ENCODE measurements at regions of chr6 and their contacts with region 1.

Region 1: DNA sequence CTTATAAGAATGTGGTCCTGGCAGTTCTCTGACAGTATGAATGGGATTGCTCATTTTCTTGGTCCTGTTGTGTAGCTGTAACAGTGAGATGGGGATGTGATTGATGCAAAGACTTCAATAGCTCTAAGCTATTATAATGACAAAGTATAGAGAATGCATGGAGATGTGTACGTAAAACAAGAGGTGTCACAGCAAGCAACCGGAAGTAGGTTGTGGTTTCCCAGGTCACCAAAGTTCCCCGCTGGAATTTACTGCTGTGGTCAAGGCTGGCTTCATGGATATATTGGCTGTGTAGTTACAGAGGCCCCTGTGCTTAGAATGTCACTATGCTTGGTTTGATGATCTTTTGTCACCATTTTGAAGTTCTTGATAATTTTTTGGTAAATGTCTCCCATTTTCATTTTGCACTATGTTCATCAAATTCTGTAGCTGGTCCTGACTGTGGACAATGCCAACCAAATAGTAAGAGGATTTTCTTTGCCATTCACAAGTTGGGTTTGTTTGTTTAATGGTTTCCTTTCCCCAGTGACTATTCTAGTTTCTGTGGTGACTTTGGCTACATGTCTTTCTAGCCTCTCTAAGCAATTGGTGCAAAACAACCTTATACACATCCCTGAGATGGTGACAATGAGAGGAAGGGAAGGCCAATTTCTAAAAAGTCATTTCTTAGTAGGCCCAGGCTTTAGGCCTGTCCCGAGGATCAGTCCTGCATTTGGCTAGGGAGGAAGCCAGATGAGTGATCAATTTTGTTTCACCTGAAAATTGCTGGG is 10.5 kb downstream of the DNAH8 start:
- DNase-seq: no peak
- H3K4me3 ChIP-seq: no peak overlapping the region
- H3K27ac ChIP-seq: no peak overlapping the region
- H3K4me1 ChIP-seq: no peaks in the 10 kb centered on the region
- H3K27me3 ChIP-seq: no peaks in the 10 kb centered on the region
- CTCF ChIP-seq: no peak

Region 2: GRCh38 chr6:38378801-38379200 is 346.8 kb before region 1 on chr6:
- CTCF ChIA-PET with region 1: no interaction called
- POLR2A ChIA-PET with region 1: interaction called, 30 read pairs
- intact Hi-C with region 1: no loop called
- DNase-seq: no peak
- H3K4me3 ChIP-seq: no peak overlapping the region
- H3K27ac ChIP-seq: no peak overlapping the region
- H3K4me1 ChIP-seq: no peaks in the 10 kb centered on the region
- H3K27me3 ChIP-seq: no peaks in the 10 kb centered on the region
- CTCF ChIP-seq: no peak

Region 3: DNA sequence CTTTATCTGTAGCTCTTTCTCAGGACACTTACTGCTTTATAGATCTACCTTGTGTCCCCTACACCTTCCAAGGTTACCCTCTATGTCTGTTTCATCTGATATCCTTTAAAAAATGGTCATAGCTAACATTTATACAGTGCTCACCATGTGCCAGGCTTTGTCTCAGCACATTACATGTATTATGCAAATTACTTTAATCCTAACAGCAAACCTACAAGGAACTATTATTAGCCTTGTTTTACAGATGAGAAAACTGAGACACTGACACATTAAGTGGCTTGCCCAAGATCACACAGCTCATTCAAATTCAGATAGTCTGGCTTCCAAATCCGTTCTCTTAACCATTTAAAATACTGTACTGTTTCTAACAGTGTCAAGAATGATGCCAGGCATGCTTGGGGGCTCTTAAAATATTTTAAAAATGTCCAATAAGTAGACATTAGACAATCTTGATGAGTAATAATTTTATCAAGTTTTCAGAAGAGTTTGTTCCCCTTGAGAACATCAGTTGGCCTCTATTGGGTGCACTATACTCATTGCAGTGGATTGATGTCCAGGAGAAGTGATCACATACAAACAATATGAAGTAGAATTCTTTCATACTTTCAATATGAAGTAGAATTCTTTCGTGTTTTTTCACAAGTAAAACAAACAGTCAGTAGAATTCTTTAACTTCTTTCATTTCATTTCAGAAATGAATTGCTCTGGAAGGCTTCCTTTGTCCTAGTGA is 59.1 kb after region 1 on chr6:
- CTCF ChIA-PET with region 1: no interaction called
- POLR2A ChIA-PET with region 1: no interaction called
- intact Hi-C with region 1: no loop called
- DNase-seq: no peak
- H3K4me3 ChIP-seq: no peak overlapping the region
- H3K27ac ChIP-seq: no peak overlapping the region
- H3K4me1 ChIP-seq: no peaks in the 10 kb centered on the region
- H3K27me3 ChIP-seq: no peaks in the 10 kb centered on the region
- CTCF ChIP-seq: no peak